CD4-positive, alpha-beta T cell (primary cell): ENCODE measurements at regions of chr10 and their contacts with region 1.

Region 1: DNA sequence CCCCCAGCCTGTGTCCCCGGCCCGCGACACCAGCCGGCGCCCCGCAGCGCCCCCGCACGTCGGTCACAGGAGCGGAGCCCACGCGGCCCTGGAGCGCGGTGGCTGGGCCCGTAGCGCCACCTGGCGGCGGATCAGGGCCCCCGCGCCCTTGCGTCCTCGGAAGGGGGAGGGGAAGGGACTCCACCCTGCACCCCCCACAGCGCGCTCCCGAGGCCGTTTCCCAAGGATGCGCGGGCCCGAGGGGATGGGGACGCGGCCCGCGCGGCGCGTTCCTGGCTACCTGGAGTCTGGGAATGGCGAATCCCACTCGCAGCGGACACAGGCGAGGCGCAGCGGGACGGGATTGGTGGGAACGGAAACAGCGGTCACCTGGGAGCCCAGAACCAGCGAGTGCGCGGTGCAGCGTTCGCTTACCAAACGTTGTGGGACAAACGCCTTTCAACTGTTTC is 23.8 kb upstream of the MKI67 start:
- DNase-seq: peak; percentile 62 to 94 (median 72)
- ATAC-seq: peak; percentile 98
- H3K4me3 ChIP-seq: peak overlapping the region; percentile 73
- H3K4me3 Mint-ChIP-seq: peak overlapping the region; percentile 69
- H3K27ac ChIP-seq: no peak overlapping the region
- H3K27ac Mint-ChIP-seq: no peak overlapping the region
- H3K4me1 ChIP-seq: peaks cover 11% of the 10 kb centered on the region
- H3K4me1 Mint-ChIP-seq: no peaks in the 10 kb centered on the region
- H3K27me3 ChIP-seq: peaks cover 0 to 2% of the 10 kb centered on the region in 2 experiments
- H3K27me3 Mint-ChIP-seq: no peaks in the 10 kb centered on the region
- CTCF ChIP-seq: peak; percentile 77

Region 2: DNA sequence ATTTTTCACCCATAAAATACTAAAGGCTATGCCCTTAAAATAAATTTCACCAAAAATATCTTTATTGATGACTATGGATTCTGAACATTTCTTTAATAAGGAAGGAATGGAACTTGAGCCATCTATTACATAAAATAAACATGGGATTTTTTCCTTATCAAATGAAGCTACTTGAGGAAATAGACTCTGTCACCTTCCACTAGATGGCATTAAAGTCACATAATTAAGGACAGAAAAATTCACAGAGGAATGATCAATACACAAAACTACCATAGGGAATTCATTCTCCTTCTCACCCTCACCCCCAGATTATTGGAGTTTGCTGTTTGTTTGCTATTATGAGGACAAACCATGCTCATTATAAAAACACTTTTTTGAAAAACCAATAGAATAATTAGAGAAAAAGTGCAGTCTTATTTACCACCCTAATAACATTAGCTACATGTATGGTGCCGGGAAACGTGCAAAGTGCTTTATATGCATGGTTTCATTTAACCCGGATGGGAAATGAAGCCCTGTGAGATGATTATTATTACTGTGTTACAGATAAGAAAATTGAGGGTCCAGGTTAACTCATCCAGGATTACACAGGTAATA is 434.2 kb before region 1 on chr10:
- CTCF ChIA-PET with region 1: no interaction called
- POLR2A ChIA-PET with region 1: no interaction called
- intact Hi-C with region 1: loop called (anchors 2 to 5 kb)
- DNase-seq: peak in 2 of 14 experiments; percentile 19 to 24
- ATAC-seq: no peak
- H3K4me3 ChIP-seq: no peak overlapping the region
- H3K4me3 Mint-ChIP-seq: no peak overlapping the region
- H3K27ac ChIP-seq: no peak overlapping the region
- H3K27ac Mint-ChIP-seq: no peak overlapping the region
- H3K4me1 ChIP-seq: no peaks in the 10 kb centered on the region
- H3K4me1 Mint-ChIP-seq: no peaks in the 10 kb centered on the region
- H3K27me3 ChIP-seq: peaks cover 2 to 4% of the 10 kb centered on the region in 2 experiments
- H3K27me3 Mint-ChIP-seq: peaks cover 7% of the 10 kb centered on the region
- CTCF ChIP-seq: peak; percentile 34

Region 3: DNA sequence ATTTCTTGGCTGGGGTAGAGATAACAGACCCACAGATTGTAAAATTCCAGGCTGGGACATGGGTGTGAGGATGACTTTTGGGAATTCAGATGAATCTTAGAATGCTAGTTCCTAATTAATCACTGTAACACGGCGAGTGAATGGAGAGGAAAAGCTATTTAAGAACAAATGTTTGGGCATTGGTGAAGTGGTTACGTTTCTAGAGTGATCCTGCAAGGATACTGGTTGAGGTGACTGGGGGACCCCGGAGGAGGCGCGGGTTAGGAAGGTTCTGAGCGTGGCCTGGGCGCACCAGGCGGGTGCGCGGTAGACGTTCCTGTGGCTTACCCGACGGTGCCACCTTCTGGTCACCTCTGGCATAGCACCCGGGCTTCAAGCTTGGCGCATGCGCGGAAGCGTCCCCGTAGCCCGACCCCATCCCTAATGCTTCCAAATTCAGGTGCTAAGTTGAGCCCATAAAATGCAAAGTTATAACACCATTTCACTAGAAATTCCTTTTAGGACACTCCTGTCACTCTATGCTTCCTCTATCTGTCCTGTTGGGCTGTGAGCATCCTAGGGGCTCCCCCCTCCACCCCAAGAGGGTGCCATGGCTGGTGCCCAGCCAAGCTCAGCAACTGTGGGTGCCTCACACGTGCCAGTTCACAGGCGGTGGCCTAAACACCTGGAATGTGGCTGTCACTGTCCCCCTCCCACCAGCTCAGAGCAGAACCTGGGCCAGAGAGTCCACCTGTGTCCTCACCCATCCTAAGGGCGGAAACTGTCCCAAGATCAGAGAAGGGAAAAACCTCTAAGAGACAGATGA is 138.7 kb before region 1 on chr10:
- CTCF ChIA-PET with region 1: interaction called, 3 read pairs
- POLR2A ChIA-PET with region 1: no interaction called
- intact Hi-C with region 1: loop called in 1 of 2 experiments (anchors 5 kb)
- DNase-seq: peak; percentile 76 to 94 (median 86)
- ATAC-seq: peak; percentile 99
- H3K4me3 ChIP-seq: no peak overlapping the region
- H3K4me3 Mint-ChIP-seq: peak overlapping the region; percentile 28
- H3K27ac ChIP-seq: no peak overlapping the region
- H3K27ac Mint-ChIP-seq: no peak overlapping the region
- H3K4me1 ChIP-seq: peaks cover 9% of the 10 kb centered on the region
- H3K4me1 Mint-ChIP-seq: peaks cover 9% of the 10 kb centered on the region
- H3K27me3 ChIP-seq: no peaks in the 10 kb centered on the region
- H3K27me3 Mint-ChIP-seq: peaks cover 4% of the 10 kb centered on the region
- CTCF ChIP-seq: peak; percentile 99

Region 4: DNA sequence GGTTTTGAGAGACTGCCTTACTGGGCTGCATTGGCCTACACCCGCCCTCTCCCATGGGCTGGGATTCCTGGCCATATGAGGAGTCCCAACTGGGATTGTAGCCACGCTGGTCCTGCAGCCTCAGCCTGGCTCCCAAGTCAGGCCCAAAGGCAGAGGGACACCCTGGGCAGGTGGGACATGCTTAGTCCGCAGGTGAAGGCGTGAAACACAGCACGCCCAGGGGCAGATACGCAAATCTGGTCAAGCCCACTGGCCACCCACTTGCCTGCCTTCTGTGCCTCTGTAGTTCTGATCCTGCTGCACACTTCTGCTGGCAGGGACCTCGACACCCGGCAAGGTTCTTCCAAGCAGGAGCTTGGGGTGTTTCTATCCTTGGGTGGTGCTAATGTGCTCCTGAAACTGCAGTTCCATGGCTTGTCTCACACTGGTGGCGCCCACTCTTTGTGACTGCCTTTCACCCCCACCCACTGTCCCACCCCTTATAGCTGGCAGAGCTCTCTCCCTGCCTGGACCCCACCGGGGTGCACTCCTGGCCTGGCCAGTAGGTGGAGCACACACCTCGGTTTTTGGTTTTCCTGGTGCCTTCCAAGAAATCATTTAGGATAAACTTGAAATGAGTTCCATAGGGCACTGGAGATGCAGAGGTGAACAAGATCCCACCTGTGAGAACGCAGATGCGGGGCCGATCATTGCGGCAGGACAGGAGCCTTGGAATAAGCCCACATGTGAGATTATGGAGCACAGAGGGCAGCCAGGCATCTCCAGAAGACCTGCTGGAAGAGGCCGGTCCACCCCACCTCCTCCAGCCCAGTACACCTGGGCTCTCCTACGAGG is 71.7 kb before region 1 on chr10:
- CTCF ChIA-PET with region 1: interaction called, 5 read pairs
- POLR2A ChIA-PET with region 1: no interaction called
- intact Hi-C with region 1: loop called (anchors 1 to 5 kb)
- DNase-seq: peak in 7 of 14 experiments; percentile 35 to 64 (median 47)
- ATAC-seq: peak; percentile 73
- H3K4me3 ChIP-seq: no peak overlapping the region
- H3K4me3 Mint-ChIP-seq: no peak overlapping the region
- H3K27ac ChIP-seq: no peak overlapping the region
- H3K27ac Mint-ChIP-seq: no peak overlapping the region
- H3K4me1 ChIP-seq: no peaks in the 10 kb centered on the region
- H3K4me1 Mint-ChIP-seq: peaks cover 7% of the 10 kb centered on the region
- H3K27me3 ChIP-seq: no peaks in the 10 kb centered on the region
- H3K27me3 Mint-ChIP-seq: no peaks in the 10 kb centered on the region
- CTCF ChIP-seq: peak; percentile 70

Region 5: GRCh38 chr10:128111696-128112095 is 38.4 kb before region 1 on chr10:
- CTCF ChIA-PET with region 1: no interaction called
- POLR2A ChIA-PET with region 1: no interaction called
- intact Hi-C with region 1: no loop called
- DNase-seq: no peak
- ATAC-seq: no peak
- H3K4me3 ChIP-seq: no peak overlapping the region
- H3K4me3 Mint-ChIP-seq: no peak overlapping the region
- H3K27ac ChIP-seq: no peak overlapping the region
- H3K27ac Mint-ChIP-seq: no peak overlapping the region
- H3K4me1 ChIP-seq: no peaks in the 10 kb centered on the region
- H3K4me1 Mint-ChIP-seq: no peaks in the 10 kb centered on the region
- H3K27me3 ChIP-seq: no peaks in the 10 kb centered on the region
- H3K27me3 Mint-ChIP-seq: no peaks in the 10 kb centered on the region
- CTCF ChIP-seq: no peak

Region 6: GRCh38 chr10:128173369-128173768 is 23.3 kb after region 1 on chr10:
- CTCF ChIA-PET with region 1: no interaction called
- POLR2A ChIA-PET with region 1: no interaction called
- intact Hi-C with region 1: no loop called
- DNase-seq: no peak
- ATAC-seq: no peak
- H3K4me3 ChIP-seq: no peak overlapping the region
- H3K4me3 Mint-ChIP-seq: no peak overlapping the region
- H3K27ac ChIP-seq: no peak overlapping the region
- H3K27ac Mint-ChIP-seq: no peak overlapping the region
- H3K4me1 ChIP-seq: peaks cover 3% of the 10 kb centered on the region
- H3K4me1 Mint-ChIP-seq: no peaks in the 10 kb centered on the region
- H3K27me3 ChIP-seq: peaks cover 4 to 7% of the 10 kb centered on the region in 2 experiments
- H3K27me3 Mint-ChIP-seq: peaks cover 19% of the 10 kb centered on the region
- CTCF ChIP-seq: no peak